Activated CD8-positive, alpha-beta T cell treated with anti-CD3 and anti-CD28 coated beads for 36 hours (primary cell): ENCODE measurements at regions of chr3 and their contacts with region 1.

Region 1: GRCh38 chr3:111967651-111968274 is 11.1 kb upstream of the ABHD10 start:
- DNase-seq: peak; percentile 94
- ATAC-seq: peak; percentile 96
- H3K4me3 Mint-ChIP-seq: no peak overlapping the region
- H3K27ac Mint-ChIP-seq: peak overlapping the region; percentile 57
- H3K4me1 Mint-ChIP-seq: peaks cover 20% of the 10 kb centered on the region
- H3K27me3 Mint-ChIP-seq: no peaks in the 10 kb centered on the region
- CTCF ChIP-seq: peak; percentile 87

Region 2: DNA sequence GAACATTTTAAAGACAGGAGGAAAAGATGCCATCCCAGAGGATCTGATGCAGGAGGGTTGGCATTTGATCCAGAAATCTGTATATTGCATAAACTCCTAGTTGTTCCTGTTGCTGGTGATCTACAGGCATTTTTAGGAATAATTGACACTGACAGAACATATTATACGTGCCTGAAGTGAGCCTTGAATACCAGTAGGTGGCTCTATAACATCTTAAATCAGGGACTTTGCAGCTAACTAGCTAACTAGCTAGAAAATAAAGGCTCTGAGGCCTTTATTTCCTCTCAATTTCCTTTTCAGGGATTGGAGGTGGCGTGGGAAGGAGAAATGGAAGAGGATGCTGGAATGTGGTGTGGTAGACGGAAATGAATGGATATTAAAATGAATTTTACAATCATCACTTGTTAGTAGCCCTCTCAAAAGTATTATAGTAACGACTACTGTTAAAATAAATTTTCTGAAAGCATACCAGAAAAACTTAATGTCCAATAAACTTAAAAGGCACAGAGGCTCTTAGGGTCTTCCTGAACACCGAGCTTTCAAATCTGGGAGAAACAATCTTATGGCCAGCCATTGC is 298.8 kb before region 1 on chr3:
- CTCF ChIA-PET with region 1: interaction called, 65 read pairs
- POLR2A ChIA-PET with region 1: no interaction called
- intact Hi-C with region 1: loop called (anchors 1 kb)
- DNase-seq: no peak
- ATAC-seq: peak; percentile 50
- H3K4me3 Mint-ChIP-seq: no peak overlapping the region
- H3K27ac Mint-ChIP-seq: peak overlapping the region; percentile 68
- H3K4me1 Mint-ChIP-seq: peaks cover 84% of the 10 kb centered on the region
- H3K27me3 Mint-ChIP-seq: no peaks in the 10 kb centered on the region
- CTCF ChIP-seq: peak; percentile 84

Region 3: GRCh38 chr3:111859974-111860859 is 107.5 kb before region 1 on chr3:
- CTCF ChIA-PET with region 1: interaction called, 10 read pairs
- POLR2A ChIA-PET with region 1: no interaction called
- intact Hi-C with region 1: no loop called
- DNase-seq: peak; percentile 75
- ATAC-seq: peak; percentile 72
- H3K4me3 Mint-ChIP-seq: peak overlapping the region; percentile 92
- H3K27ac Mint-ChIP-seq: peak overlapping the region; percentile 57
- H3K4me1 Mint-ChIP-seq: peaks cover 7% of the 10 kb centered on the region
- H3K27me3 Mint-ChIP-seq: peaks cover 22% of the 10 kb centered on the region
- CTCF ChIP-seq: peak; percentile 47

Region 4: GRCh38 chr3:111956995-111957734 is 10.6 kb before region 1 on chr3:
- CTCF ChIA-PET with region 1: interaction called, 27 read pairs
- POLR2A ChIA-PET with region 1: no interaction called
- intact Hi-C with region 1: no loop called
- DNase-seq: no peak
- ATAC-seq: no peak
- H3K4me3 Mint-ChIP-seq: no peak overlapping the region
- H3K27ac Mint-ChIP-seq: no peak overlapping the region
- H3K4me1 Mint-ChIP-seq: no peaks in the 10 kb centered on the region
- H3K27me3 Mint-ChIP-seq: no peaks in the 10 kb centered on the region
- CTCF ChIP-seq: no peak

Region 5: GRCh38 chr3:111989061-111989678 is 21.4 kb after region 1 on chr3:
- CTCF ChIA-PET with region 1: interaction called, 14 read pairs
- POLR2A ChIA-PET with region 1: no interaction called
- intact Hi-C with region 1: no loop called
- DNase-seq: no peak
- ATAC-seq: peak; percentile 68
- H3K4me3 Mint-ChIP-seq: no peak overlapping the region
- H3K27ac Mint-ChIP-seq: peak overlapping the region; percentile 28
- H3K4me1 Mint-ChIP-seq: peaks cover 34% of the 10 kb centered on the region
- H3K27me3 Mint-ChIP-seq: no peaks in the 10 kb centered on the region
- CTCF ChIP-seq: peak; percentile 71

Region 6: DNA sequence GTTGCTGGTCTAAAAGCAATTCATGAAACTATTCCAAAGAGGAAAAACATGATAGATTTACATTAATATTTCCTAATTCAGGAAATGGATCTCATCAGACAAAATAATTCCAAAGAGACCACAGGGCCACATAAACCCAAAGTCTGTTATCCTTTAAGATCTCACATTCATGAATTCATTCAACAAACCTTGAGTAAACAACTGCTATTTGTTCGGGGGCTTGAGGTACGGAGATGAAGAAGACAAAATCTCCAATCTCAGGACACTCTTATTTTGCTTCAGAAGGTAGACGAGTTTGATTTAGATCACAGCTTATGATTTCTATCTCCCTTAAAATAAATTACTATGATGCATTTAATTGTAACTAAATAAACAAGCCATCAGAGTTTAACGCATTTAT is 98.0 kb after region 1 on chr3:
- CTCF ChIA-PET with region 1: no interaction called
- POLR2A ChIA-PET with region 1: no interaction called
- intact Hi-C with region 1: no loop called
- DNase-seq: no peak
- ATAC-seq: no peak
- H3K4me3 Mint-ChIP-seq: no peak overlapping the region
- H3K27ac Mint-ChIP-seq: no peak overlapping the region
- H3K4me1 Mint-ChIP-seq: no peaks in the 10 kb centered on the region
- H3K27me3 Mint-ChIP-seq: no peaks in the 10 kb centered on the region
- CTCF ChIP-seq: no peak

Region 7: DNA sequence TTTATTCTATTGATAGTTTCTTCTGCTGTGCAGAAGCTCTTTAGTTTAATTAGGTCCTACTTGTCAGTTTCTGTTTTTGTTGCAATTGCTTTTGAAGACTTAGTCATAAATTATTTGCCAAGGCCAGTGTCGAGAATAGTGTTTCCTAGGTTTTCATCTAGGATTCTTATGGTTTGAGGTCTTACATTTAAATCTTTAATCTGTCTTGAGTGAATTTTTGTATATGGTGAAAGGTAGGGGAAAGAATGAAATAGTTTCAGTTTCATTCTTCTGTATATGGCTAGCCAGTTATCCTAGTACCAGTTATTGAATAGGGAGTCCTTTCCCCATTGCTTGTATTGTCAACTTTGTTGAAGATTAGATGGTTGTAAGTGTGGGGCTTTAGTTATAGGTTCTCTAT is 175.9 kb after region 1 on chr3:
- CTCF ChIA-PET with region 1: no interaction called
- POLR2A ChIA-PET with region 1: no interaction called
- intact Hi-C with region 1: no loop called
- DNase-seq: no peak
- ATAC-seq: peak; percentile 64
- H3K4me3 Mint-ChIP-seq: peak overlapping the region; percentile 24
- H3K27ac Mint-ChIP-seq: peak overlapping the region; percentile 25
- H3K4me1 Mint-ChIP-seq: peaks cover 16% of the 10 kb centered on the region
- H3K27me3 Mint-ChIP-seq: no peaks in the 10 kb centered on the region
- CTCF ChIP-seq: no peak